ENCODE measurements at regions of chr3 and their contacts with region 1.

Region 1: DNA sequence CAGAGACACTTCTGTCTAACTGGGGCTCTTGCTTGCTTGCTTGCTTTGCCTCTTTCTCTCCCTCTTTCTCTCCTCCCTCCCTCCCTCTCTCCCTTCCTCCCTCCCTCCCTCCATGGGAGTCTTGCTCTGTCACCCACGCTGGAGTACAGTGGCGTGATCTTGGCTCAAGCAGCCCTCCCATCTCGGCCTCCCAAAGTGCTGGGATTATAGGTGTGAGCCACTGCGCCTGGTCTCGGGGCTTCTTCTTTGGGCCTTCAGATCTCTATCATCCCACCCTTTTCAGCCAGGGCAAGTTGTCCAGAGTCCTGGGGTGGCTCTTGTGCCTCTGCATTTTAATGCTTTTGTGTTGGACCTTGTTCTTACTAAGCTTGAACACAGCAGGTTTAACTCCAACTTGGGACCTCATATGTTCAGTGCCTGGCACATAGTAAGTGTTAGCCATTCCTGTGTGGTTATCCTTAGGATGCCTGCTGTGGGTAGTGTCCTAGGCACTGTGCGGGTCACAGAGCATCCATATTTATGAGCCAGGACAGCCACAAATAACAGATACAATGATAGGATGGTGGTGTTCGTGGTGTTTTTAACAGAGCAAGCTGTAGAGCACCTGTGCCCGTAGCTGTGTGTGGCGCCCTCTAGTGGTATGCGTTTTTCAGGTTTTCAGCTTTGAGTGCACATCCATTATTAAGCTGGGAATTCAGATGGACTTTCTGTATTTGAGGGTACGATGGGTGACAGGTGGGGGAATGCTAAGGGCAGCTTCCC is 75.1 kb downstream of the CCK start:
- DNase-seq: peak; percentile 72 to 80 (median 78)
- ATAC-seq: peak; percentile 71
- H3K4me3 ChIP-seq: no peak overlapping the region
- H3K27ac ChIP-seq: no peak overlapping the region
- H3K4me1 ChIP-seq: no peaks in the 10 kb centered on the region
- H3K27me3 ChIP-seq: no peaks in the 10 kb centered on the region
- CTCF ChIP-seq: peak; percentile 77 to 88 (median 81)
- POLR2A ChIP-seq: no peak

Region 2: GRCh38 chr3:41900265-41900664 is 290.6 kb before region 1 on chr3:
- intact Hi-C with region 1: loop called (anchors 10 kb)
- DNase-seq: no peak
- ATAC-seq: no peak
- H3K4me3 ChIP-seq: no peak overlapping the region
- H3K27ac ChIP-seq: no peak overlapping the region
- H3K4me1 ChIP-seq: no peaks in the 10 kb centered on the region
- H3K27me3 ChIP-seq: no peaks in the 10 kb centered on the region
- CTCF ChIP-seq: no peak
- POLR2A ChIP-seq: no peak

Region 3: DNA sequence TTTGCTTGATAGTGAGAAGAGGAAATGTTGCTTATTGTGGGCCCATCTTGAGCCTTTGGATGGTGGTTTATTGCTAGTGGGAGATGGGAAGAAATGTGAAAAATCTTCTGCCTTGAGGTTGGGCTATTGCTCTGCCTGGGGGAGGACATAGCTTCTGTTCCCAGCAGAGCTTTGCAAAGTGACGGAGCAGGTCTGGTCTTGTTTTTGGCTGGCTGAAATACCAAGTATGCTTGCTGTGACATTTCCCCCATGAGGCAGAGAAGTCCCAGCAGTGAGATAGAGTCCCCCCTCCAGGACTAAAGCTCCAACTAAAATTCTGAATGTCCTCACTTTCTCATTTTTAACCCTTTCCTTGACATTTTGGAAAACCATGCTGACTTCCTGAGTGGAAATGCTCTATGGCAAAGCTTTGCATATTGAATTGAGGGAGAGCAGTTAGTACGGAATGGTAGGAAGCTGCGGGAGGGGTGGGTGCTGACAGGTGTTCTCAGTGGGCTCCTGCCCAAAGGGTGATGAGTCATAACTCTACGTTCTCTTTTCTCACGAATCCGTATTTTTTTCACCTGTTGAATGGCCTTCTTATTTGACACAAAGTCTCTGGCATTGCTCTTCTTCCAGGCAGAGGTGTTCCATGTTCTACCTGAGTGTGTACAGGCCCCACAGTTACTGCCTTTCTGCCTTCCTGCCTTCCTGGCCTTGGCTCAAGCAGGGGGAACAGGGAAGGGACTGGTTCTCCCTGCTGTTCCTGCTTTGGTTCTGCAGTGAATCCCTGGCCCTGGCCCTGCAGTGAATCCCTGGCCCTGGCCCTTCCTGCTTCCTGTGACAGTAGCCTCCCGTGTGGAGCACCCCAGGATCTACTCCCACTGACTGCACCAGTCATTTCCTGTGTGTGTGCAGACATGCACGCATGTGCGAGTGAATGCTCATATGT is 68.0 kb before region 1 on chr3:
- intact Hi-C with region 1: loop called (anchors 10 kb)
- DNase-seq: no peak
- ATAC-seq: no peak
- H3K4me3 ChIP-seq: no peak overlapping the region
- H3K27ac ChIP-seq: peak overlapping the region in 1 of 4 donors; percentile 29
- H3K4me1 ChIP-seq: peaks cover 24% of the 10 kb centered on the region
- H3K27me3 ChIP-seq: no peaks in the 10 kb centered on the region
- CTCF ChIP-seq: no peak
- POLR2A ChIP-seq: no peak

Measured in body of pancreas (tissue), 4 donors.